ENCODE measurements at regions of chr5 and their contacts with region 1.

Region 1: DNA sequence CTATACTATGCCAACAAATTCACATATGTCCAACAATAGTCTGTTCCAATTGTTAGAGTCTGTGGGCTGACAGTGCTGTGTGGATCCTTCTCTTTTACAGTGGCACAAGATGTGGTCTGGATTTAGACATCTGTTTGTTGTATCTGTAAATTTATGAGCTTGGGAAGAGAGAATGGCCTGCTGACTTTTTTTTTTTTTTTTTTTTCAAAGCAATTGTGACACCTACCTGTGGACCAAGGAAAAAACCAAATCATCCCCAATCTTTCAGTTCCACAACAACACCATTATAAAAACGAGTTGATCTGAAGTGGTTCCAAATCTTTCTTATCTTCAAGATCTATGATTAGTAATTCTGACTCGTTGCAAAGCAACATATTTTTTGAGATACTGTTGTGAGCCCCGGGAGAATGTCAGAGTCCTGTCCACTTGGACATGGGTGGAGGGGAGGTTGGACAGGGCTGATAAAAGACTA is 4.9 kb downstream of the IRX2 start:
- DNase-seq: no peak
- H3K4me3 ChIP-seq: no peak overlapping the region
- CTCF ChIP-seq: no peak
- POLR2A ChIP-seq: no peak

Region 2: GRCh38 chr5:3602785-3603502 is 856.3 kb after region 1 on chr5:
- intact Hi-C with region 1: loop called (anchors 5 kb)
- DNase-seq: peak in 1 of 2 donors; percentile 91
- H3K4me3 ChIP-seq: no peak overlapping the region
- CTCF ChIP-seq: no peak
- POLR2A ChIP-seq: no peak

Measured in lower leg skin (tissue), 4 donors.